Esophagus squamous epithelium (tissue), 5 donors: ENCODE measurements at regions of chr6 and their contacts with region 1.

Region 1: GRCh38 chr6:110682460-110682853 is 132.8 kb downstream of the CDK19 start:
- DNase-seq: no peak
- H3K4me3 ChIP-seq: no peak overlapping the region
- H3K27ac ChIP-seq: no peak overlapping the region
- H3K4me1 ChIP-seq: peaks cover 0 to 19% (median 0%) of the 10 kb centered on the region in 3 donors
- H3K27me3 ChIP-seq: no peaks in the 10 kb centered on the region
- CTCF ChIP-seq: peak; percentile 57 to 84 (median 72)
- POLR2A ChIP-seq: no peak

Region 2: DNA sequence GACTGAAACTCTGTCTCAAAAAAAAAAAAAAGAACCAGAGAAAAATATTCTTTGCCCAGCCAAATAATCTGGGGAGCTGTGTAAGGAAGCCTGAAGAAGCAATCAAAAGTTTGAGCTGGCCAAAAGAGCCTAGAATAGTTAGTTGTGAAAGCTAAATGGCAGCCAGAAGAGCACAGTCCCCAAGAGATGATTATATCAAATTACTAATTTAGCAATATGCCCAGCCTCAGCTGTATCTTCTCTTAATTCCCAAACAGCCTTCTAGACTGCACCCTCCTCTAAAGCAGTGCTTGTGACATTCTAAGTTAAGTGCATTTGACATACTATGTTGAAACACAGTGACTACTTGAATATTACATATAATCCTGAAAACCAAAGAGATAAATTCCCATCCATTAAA is 94.0 kb after region 1 on chr6:
- intact Hi-C with region 1: no loop called
- DNase-seq: no peak
- H3K4me3 ChIP-seq: no peak overlapping the region
- H3K27ac ChIP-seq: no peak overlapping the region
- H3K4me1 ChIP-seq: peaks cover 0 to 8% (median 0%) of the 10 kb centered on the region in 3 donors
- H3K27me3 ChIP-seq: no peaks in the 10 kb centered on the region
- CTCF ChIP-seq: no peak
- POLR2A ChIP-seq: no peak

Region 3: GRCh38 chr6:110944681-110945151 is 262.3 kb after region 1 on chr6:
- intact Hi-C with region 1: loop called (anchors 5 kb)
- DNase-seq: no peak
- H3K4me3 ChIP-seq: no peak overlapping the region
- H3K27ac ChIP-seq: peak overlapping the region in 3 of 4 donors; percentile 40 to 55 (median 48)
- H3K4me1 ChIP-seq: peaks cover 0 to 19% (median 0%) of the 10 kb centered on the region in 3 donors
- H3K27me3 ChIP-seq: no peaks in the 10 kb centered on the region
- CTCF ChIP-seq: no peak
- POLR2A ChIP-seq: no peak